CD4-positive, alpha-beta T cell (primary cell): ENCODE measurements at regions of chr1 and their contacts with region 1.

Region 1: GRCh38 chr1:198556971-198557370 is 16.5 kb upstream of the ATP6V1G3 start:
- DNase-seq: peak; percentile 15 to 96 (median 53)
- ATAC-seq: peak; percentile 92
- H3K4me3 ChIP-seq: peak overlapping the region; percentile 9
- H3K4me3 Mint-ChIP-seq: peak overlapping the region; percentile 71
- H3K27ac ChIP-seq: peak overlapping the region in 1 of 2 donors; percentile 1
- H3K27ac Mint-ChIP-seq: peak overlapping the region; percentile 40
- H3K4me1 ChIP-seq: peaks cover 32% of the 10 kb centered on the region
- H3K4me1 Mint-ChIP-seq: peaks cover 91% of the 10 kb centered on the region
- H3K27me3 ChIP-seq: no peaks in the 10 kb centered on the region
- H3K27me3 Mint-ChIP-seq: no peaks in the 10 kb centered on the region
- CTCF ChIP-seq: no peak

Region 2: GRCh38 chr1:198528376-198528775 is 28.6 kb before region 1 on chr1:
- CTCF ChIA-PET with region 1: interaction called, 4 read pairs
- POLR2A ChIA-PET with region 1: interaction called, 10 read pairs
- intact Hi-C with region 1: loop called in 1 of 2 experiments (anchors 5 kb)
- DNase-seq: no peak
- ATAC-seq: no peak
- H3K4me3 ChIP-seq: no peak overlapping the region
- H3K4me3 Mint-ChIP-seq: no peak overlapping the region
- H3K27ac ChIP-seq: no peak overlapping the region
- H3K27ac Mint-ChIP-seq: no peak overlapping the region
- H3K4me1 ChIP-seq: peaks cover 4% of the 10 kb centered on the region
- H3K4me1 Mint-ChIP-seq: peaks cover 70% of the 10 kb centered on the region
- H3K27me3 ChIP-seq: no peaks in the 10 kb centered on the region
- H3K27me3 Mint-ChIP-seq: no peaks in the 10 kb centered on the region
- CTCF ChIP-seq: no peak

Region 3: DNA sequence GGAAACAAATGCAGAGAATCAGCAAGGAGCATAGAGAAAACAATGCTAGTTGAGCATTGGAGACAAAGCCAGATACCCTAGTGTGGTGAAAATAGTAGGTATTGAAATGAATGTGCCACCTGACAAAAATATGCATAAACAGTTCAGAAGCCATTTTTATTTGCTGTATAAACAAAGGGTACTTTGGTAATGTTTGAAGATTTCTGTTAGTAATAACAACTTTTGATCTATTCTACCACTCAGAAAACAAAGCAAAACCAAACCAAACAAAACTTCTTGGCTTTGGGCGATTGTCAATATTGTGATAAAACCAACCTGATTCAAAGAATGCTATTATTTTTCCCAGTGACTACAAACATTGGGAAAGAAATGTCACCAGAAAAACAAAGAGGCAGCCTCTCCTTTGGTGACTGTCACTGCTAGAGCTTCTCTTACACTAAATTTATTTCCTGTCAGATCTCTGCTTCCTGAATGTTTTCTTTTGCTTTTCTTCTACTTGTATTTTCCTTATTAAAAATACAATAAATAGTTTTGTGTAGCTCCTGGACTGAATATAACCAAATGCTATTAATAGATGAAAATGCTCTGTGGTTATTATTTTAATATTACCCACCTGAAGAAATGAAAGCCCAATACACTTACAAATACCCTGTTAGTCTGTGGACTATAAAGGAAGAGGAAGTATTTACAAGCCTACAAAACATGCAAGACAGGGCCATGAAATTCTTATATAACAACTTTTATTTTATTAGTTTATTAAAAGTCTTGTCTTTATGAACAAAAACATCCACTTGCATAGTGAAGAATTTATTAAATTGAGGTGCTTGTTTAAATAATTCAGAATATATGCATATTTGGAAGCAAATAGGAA is 22.2 kb before region 1 on chr1:
- CTCF ChIA-PET with region 1: interaction called, 4 read pairs
- POLR2A ChIA-PET with region 1: interaction called, 6 read pairs
- intact Hi-C with region 1: loop called (anchors 1 to 2 kb)
- DNase-seq: no peak
- ATAC-seq: peak; percentile 48
- H3K4me3 ChIP-seq: peak overlapping the region; percentile 6
- H3K4me3 Mint-ChIP-seq: peak overlapping the region; percentile 64
- H3K27ac ChIP-seq: peak overlapping the region; percentile 14 to 74
- H3K27ac Mint-ChIP-seq: peak overlapping the region; percentile 90
- H3K4me1 ChIP-seq: peaks cover 12% of the 10 kb centered on the region
- H3K4me1 Mint-ChIP-seq: peaks cover 84% of the 10 kb centered on the region
- H3K27me3 ChIP-seq: no peaks in the 10 kb centered on the region
- H3K27me3 Mint-ChIP-seq: no peaks in the 10 kb centered on the region
- CTCF ChIP-seq: no peak

Region 4: DNA sequence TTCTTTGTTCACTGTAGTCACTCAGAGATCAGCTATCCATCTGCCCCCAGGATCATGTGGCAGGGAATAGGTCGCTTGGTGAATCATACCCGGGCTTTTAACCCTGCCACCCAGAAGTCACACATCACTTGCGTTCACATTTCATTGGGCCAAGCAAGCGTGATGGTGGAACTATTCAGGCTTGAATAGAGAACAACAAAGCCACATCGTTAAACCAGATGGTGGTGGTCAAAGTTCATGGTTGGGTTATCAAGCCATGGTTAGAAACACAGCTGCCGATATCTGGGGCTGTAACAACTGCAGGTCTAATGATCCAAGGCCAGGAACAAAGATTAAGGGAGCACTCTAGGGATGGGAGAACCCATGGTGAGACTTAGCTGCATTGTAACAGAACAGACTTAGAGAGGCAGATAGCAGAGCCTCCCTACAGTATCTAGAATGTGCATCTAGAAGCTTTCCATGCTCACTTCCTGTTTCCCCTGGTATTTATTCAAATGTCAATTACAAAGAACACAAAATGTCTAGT is 41.9 kb after region 1 on chr1:
- CTCF ChIA-PET with region 1: no interaction called
- POLR2A ChIA-PET with region 1: interaction called, 5 read pairs
- intact Hi-C with region 1: loop called in 1 of 2 experiments (anchors 5 kb)
- DNase-seq: peak in 1 of 14 experiments; percentile 26
- ATAC-seq: peak; percentile 58
- H3K4me3 ChIP-seq: no peak overlapping the region
- H3K4me3 Mint-ChIP-seq: peak overlapping the region; percentile 77
- H3K27ac ChIP-seq: peak overlapping the region in 1 of 2 donors; percentile 29
- H3K27ac Mint-ChIP-seq: peak overlapping the region; percentile 91
- H3K4me1 ChIP-seq: peaks cover 27% of the 10 kb centered on the region
- H3K4me1 Mint-ChIP-seq: peaks cover 93% of the 10 kb centered on the region
- H3K27me3 ChIP-seq: no peaks in the 10 kb centered on the region
- H3K27me3 Mint-ChIP-seq: no peaks in the 10 kb centered on the region
- CTCF ChIP-seq: no peak

Region 5: DNA sequence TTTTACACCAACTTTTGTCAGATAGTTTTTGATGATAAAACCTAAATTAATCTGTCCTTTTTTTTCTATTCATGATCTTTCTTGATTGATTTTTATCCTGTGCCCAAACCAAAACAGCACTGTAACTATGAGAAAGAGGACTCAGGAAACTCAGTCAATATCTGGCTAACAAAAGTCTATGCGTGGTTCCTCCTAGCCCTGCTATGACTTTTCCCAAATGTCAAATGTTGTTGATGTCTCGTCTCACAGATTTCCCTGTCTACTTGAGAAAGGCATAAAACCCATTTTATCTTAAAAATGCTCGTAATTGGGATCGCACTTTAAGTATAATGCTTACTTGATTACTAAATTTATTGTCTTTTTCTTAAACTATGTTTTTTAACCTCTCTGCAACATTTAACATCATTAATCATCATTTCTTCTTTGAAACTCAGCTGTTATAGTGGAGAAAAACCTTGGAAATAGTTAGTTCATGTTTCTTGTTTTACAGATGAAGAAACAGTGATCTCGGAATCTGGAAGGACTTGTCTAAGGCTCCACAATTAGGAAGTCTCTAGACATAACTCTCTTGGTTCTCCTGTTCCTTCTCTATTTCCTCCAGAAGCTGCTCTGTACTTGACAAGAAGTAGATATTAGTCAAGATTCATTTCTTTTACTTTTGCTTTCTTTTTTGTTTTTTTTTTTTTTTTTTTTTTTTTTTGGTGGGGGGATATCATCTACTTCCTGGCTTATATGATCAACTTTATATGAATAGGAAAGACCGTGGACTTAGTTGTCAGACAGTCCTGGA is 55.7 kb after region 1 on chr1:
- CTCF ChIA-PET with region 1: no interaction called
- POLR2A ChIA-PET with region 1: interaction called, 13 read pairs
- intact Hi-C with region 1: no loop called
- DNase-seq: peak in 3 of 14 experiments; percentile 57 to 78 (median 60)
- ATAC-seq: peak; percentile 45
- H3K4me3 ChIP-seq: peak overlapping the region; percentile 28
- H3K4me3 Mint-ChIP-seq: peak overlapping the region; percentile 79
- H3K27ac ChIP-seq: peak overlapping the region; percentile 71
- H3K27ac Mint-ChIP-seq: peak overlapping the region; percentile 98
- H3K4me1 ChIP-seq: peaks cover 50% of the 10 kb centered on the region
- H3K4me1 Mint-ChIP-seq: peaks cover 70% of the 10 kb centered on the region
- H3K27me3 ChIP-seq: no peaks in the 10 kb centered on the region
- H3K27me3 Mint-ChIP-seq: no peaks in the 10 kb centered on the region
- CTCF ChIP-seq: no peak

Region 6: DNA sequence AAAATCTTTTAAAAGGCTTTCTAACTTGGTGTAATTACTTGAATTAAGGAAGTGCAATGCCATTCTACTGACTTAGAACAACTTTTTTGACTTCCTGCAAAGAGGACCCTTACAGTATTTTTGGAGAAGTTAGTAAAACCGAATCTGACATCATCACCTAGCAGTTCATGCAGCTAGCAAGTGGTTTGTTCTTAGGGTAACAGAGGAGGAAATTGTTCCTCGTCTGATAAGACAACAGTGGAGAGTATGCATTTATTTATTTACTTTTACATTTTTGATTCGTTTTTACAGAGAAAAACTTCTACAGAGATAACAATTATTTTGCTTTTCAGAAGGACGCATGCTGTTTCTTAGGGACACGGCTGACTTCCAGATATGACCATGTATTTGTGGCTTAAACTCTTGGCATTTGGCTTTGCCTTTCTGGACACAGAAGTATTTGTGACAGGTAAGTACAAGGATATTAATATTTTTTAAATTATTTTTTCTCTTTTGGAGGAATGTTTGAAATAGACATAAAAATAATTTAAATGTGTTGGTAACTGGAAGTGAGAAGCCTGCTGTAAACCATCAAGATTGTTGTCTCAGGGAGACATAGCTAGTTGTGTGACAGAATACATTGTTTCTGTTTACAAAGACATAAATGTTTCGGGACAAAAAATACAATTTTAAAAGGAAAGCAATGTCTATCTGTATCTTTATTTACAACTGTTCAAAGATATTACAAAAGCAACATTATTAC is 82.1 kb after region 1 on chr1 and contains the start of gene PTPRC:
- CTCF ChIA-PET with region 1: no interaction called
- POLR2A ChIA-PET with region 1: interaction called, 11 read pairs
- intact Hi-C with region 1: loop called in 1 of 2 experiments (anchors 5 kb)
- DNase-seq: peak in 4 of 14 experiments; percentile 35 to 88 (median 76)
- ATAC-seq: peak; percentile 83
- H3K4me3 ChIP-seq: peak within 1 kb of the TSS; percentile 79
- H3K4me3 Mint-ChIP-seq: peak within 1 kb of the TSS; percentile 95
- H3K27ac ChIP-seq: peak within 1 kb of the TSS; percentile 67 to 77
- H3K27ac Mint-ChIP-seq: peak within 1 kb of the TSS; percentile 98
- H3K4me1 ChIP-seq: peaks cover 20% of the 10 kb centered on the region
- H3K4me1 Mint-ChIP-seq: peaks cover 62% of the 10 kb centered on the region
- H3K27me3 ChIP-seq: no peaks in the 10 kb centered on the region
- H3K27me3 Mint-ChIP-seq: no peaks in the 10 kb centered on the region
- CTCF ChIP-seq: no peak
- total RNA-seq, gene PTPRC: 661 to 698 TPM